ENCODE measurements at regions of chr6 and their contacts with region 1.

Region 1: GRCh38 chr6:18503593-18504231 is 116.6 kb downstream of the RNF144B start:
- DNase-seq: peak; percentile 54 to 57
- H3K4me3 ChIP-seq: peak overlapping the region; percentile 28; the same call in 1 of the 2 replicates
- H3K4me3 Mint-ChIP-seq: peak overlapping the region; percentile 53
- H3K27ac Mint-ChIP-seq: no peak overlapping the region
- H3K4me1 ChIP-seq: no peaks in the 10 kb centered on the region
- H3K4me1 Mint-ChIP-seq: no peaks in the 10 kb centered on the region
- H3K27me3 ChIP-seq: no peaks in the 10 kb centered on the region
- H3K27me3 Mint-ChIP-seq: peaks cover 6% of the 10 kb centered on the region
- CTCF ChIP-seq: peak; percentile 73 to 92

Region 2: DNA sequence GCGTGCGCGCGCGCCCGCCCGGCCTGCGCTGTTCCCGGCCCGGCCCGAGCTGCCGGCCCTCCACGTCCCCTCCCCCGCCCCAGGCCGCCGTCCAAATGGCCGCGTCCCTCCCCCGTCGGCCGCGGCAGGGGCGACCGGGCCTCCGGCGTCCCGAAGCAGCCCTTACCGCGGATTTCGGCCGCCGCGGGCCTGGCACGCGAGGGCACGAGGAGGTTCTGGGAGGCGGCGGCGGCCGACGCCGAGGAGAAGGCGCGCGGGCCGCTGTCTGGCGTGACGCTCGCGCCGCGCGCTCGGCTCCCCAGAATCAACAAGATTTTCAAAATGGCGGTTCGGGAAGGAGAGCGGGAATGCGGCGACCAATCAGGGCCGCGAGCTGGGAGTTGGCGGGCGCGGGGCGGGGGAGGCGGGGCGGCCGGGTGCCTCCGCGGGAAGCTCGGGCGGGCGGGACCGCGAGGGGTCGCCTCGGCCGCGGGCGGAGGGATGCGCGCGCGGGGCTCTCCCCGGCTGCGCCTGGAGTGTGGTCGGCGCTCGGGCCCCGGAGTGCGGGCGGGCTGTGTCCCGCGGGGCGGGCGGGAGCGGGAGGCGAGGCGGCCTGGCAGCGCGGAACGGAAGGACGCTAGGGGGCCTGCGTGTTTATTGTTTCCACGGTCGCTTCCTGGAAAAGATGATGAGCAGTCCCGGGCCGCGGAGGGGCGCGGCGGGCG is 239.3 kb before region 1 on chr6 and contains the start of gene DEK:
- CTCF ChIA-PET with region 1: no interaction called
- POLR2A ChIA-PET with region 1: no interaction called
- intact Hi-C with region 1: loop called (anchors 2 kb)
- DNase-seq: peak; percentile 90 to 91
- H3K4me3 ChIP-seq: peak within 1 kb of the TSS; percentile 95
- H3K4me3 Mint-ChIP-seq: peak within 1 kb of the TSS; percentile 95
- H3K27ac Mint-ChIP-seq: peak within 1 kb of the TSS; percentile 93
- H3K4me1 ChIP-seq: peaks cover 12% of the 10 kb centered on the region
- H3K4me1 Mint-ChIP-seq: peaks cover 8% of the 10 kb centered on the region
- H3K27me3 ChIP-seq: no peaks in the 10 kb centered on the region
- H3K27me3 Mint-ChIP-seq: no peaks in the 10 kb centered on the region
- CTCF ChIP-seq: peak; percentile 23 to 36
- total RNA-seq, gene DEK: 170 and 171 TPM in 2 replicates

Region 3: DNA sequence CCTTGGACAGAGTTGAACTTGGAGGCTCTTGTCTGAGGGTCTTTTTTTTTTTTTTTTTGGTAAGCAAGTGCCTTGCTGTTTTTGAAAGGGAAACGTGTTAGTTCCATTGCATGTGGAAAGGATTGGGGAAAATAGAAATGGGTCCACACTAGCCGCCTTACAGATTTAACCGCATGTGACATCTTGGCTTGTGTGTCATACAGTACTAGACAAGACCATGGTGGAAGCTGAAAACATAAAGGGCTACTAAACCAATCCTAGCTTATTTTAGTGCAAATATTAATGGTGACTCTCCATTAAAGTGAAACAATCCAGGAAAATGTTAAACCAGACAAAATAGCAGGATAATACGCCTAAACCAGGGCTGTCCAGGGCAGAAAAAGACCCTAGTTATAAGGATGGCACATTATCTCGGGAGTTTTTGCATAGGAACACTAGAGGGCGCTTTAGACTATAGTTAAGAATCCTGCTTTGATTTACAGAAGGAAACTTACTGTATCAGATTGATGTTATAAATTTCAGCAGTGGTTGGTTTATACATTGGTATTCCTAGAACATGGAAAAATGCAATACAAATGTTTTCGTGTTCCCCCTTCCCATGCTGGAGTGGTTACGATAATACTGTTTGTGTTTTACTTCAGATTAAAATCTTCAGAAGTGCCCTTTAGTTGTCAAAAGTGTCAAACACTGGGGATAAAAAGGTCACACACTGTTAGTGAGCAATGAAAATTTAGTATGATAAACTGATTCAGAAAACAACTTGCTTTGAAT is 179.6 kb before region 1 on chr6:
- CTCF ChIA-PET with region 1: interaction called, 3 read pairs
- POLR2A ChIA-PET with region 1: no interaction called
- intact Hi-C with region 1: loop called (anchors 1 kb)
- DNase-seq: peak in 1 of 2 experiments; percentile 33
- H3K4me3 ChIP-seq: no peak overlapping the region
- H3K4me3 Mint-ChIP-seq: no peak overlapping the region
- H3K27ac Mint-ChIP-seq: no peak overlapping the region
- H3K4me1 ChIP-seq: no peaks in the 10 kb centered on the region
- H3K4me1 Mint-ChIP-seq: no peaks in the 10 kb centered on the region
- H3K27me3 ChIP-seq: no peaks in the 10 kb centered on the region
- H3K27me3 Mint-ChIP-seq: peaks cover 8% of the 10 kb centered on the region
- CTCF ChIP-seq: peak; percentile 66 to 68

Region 4: DNA sequence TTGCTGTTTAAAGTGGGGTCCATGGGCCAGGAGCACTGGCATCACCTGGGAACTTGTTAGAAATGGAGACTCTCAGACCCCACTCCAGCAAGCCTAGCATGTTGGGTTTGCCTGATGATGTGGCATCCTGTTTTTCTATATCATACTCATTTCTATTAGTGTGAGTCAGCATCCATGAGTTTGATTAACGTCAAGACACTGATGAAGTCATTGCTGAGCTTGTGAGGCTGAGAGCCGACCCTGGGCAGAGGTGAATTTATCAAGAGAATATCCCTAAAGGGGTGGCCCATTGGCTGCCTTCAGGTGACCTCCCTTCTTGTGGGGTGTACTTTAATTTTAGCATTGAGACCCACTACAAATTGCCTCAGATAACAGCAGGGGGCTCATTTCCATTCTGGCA is 160.0 kb before region 1 on chr6:
- CTCF ChIA-PET with region 1: no interaction called
- POLR2A ChIA-PET with region 1: no interaction called
- intact Hi-C with region 1: loop called (anchors 5 kb)
- DNase-seq: no peak
- H3K4me3 ChIP-seq: no peak overlapping the region
- H3K4me3 Mint-ChIP-seq: no peak overlapping the region
- H3K27ac Mint-ChIP-seq: no peak overlapping the region
- H3K4me1 ChIP-seq: no peaks in the 10 kb centered on the region
- H3K4me1 Mint-ChIP-seq: no peaks in the 10 kb centered on the region
- H3K27me3 ChIP-seq: no peaks in the 10 kb centered on the region
- H3K27me3 Mint-ChIP-seq: no peaks in the 10 kb centered on the region
- CTCF ChIP-seq: no peak

Region 5: DNA sequence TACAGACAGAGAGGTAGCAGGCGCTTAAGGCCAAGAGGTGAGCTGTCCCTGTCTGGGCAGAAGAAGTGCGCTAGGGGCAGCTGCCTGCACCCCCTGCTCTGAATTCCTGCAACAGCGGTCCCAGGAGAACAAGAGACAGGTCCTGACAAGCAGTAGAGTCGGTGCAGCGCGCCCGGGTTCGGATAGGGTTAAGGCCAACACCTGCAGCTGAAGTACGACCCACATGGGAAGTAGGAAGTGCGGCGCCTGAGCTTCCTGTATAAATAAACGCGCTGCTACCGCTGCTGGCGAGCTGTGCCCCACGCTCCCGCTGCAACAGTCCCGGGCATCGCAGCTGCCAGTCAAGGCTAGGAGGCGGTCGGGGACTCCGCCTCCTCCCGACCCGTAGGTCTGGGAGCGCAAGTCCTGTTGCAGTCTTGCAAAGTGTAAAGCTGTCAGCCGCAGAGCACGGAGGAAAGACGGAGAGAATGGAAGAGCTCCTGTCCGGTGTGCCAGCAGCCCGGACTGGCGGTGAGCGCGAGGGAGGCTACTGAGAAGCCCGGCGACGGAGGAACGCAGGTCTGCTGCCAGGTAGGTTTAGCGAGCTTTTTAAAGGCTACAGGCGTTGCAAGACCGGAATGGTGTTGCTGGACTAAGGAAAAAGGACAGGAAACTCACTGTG is 116.5 kb before region 1 on chr6 and contains the start of gene RNF144B:
- CTCF ChIA-PET with region 1: no interaction called
- POLR2A ChIA-PET with region 1: no interaction called
- intact Hi-C with region 1: loop called (anchors 1 kb)
- DNase-seq: peak; percentile 63 to 66
- H3K4me3 ChIP-seq: peak within 1 kb of the TSS; percentile 48
- H3K4me3 Mint-ChIP-seq: peak within 1 kb of the TSS; percentile 87
- H3K27ac Mint-ChIP-seq: peak within 1 kb of the TSS; percentile 49
- H3K4me1 ChIP-seq: 0 out of 2 replicates have a peak, but pooled peaks cover 3% of the 10 kb centered on the region
- H3K4me1 Mint-ChIP-seq: peaks cover 6% of the 10 kb centered on the region
- H3K27me3 ChIP-seq: no peaks in the 10 kb centered on the region
- H3K27me3 Mint-ChIP-seq: peaks cover 21% of the 10 kb centered on the region
- CTCF ChIP-seq: peak in 1 of 2 experiments; percentile 6
- total RNA-seq, gene RNF144B: 0.39 TPM in 2 replicates

Region 6: DNA sequence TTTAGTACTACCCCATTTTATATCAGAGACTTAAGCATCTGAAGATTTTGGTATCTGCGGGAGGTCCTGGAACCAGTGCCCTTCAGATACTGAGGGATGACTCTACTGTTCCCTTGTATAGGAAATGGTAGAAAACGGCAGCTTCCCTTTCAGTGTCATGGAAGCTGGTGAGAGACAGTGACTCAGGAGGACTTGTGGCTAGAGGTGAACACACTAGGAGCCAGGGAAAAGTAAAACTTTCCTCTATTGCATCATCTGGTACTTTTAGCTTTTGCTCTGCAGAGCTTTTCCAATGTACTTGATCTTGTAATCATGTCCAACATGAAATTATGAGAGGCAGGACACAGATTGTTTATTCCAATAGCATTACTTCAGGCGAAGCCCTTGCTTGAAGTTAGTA is 71.5 kb before region 1 on chr6:
- CTCF ChIA-PET with region 1: no interaction called
- POLR2A ChIA-PET with region 1: no interaction called
- intact Hi-C with region 1: loop called (anchors 5 kb)
- DNase-seq: no peak
- H3K4me3 ChIP-seq: no peak overlapping the region
- H3K4me3 Mint-ChIP-seq: no peak overlapping the region
- H3K27ac Mint-ChIP-seq: no peak overlapping the region
- H3K4me1 ChIP-seq: no peaks in the 10 kb centered on the region
- H3K4me1 Mint-ChIP-seq: no peaks in the 10 kb centered on the region
- H3K27me3 ChIP-seq: no peaks in the 10 kb centered on the region
- H3K27me3 Mint-ChIP-seq: peaks cover 6% of the 10 kb centered on the region
- CTCF ChIP-seq: no peak

Region 7: GRCh38 chr6:18465410-18466154 is 38.1 kb before region 1 on chr6:
- CTCF ChIA-PET with region 1: no interaction called
- POLR2A ChIA-PET with region 1: no interaction called
- intact Hi-C with region 1: no loop called
- DNase-seq: no peak
- H3K4me3 ChIP-seq: no peak overlapping the region
- H3K4me3 Mint-ChIP-seq: no peak overlapping the region
- H3K27ac Mint-ChIP-seq: no peak overlapping the region
- H3K4me1 ChIP-seq: peaks cover 8% of the 10 kb centered on the region
- H3K4me1 Mint-ChIP-seq: no peaks in the 10 kb centered on the region
- H3K27me3 ChIP-seq: no peaks in the 10 kb centered on the region
- H3K27me3 Mint-ChIP-seq: peaks cover 3% of the 10 kb centered on the region
- CTCF ChIP-seq: no peak

Measured in Caco-2 (cell line).